ENCODE measurements at regions of chr4 and their contacts with region 1.

Region 1: GRCh38 chr4:76758290-76758882 is 139.6 kb downstream of the SOWAHB start:
- DNase-seq: peak; percentile 37
- CTCF ChIP-seq: peak; percentile 67

Region 2: GRCh38 chr4:76430519-76431388 is 327.6 kb before region 1 on chr4:
- in situ Hi-C with region 1: loop called (anchors 10 kb)
- DNase-seq: peak; percentile 62
- CTCF ChIP-seq: peak; percentile 63